ENCODE measurements at regions of chr18 and their contacts with region 1.

Region 1: DNA sequence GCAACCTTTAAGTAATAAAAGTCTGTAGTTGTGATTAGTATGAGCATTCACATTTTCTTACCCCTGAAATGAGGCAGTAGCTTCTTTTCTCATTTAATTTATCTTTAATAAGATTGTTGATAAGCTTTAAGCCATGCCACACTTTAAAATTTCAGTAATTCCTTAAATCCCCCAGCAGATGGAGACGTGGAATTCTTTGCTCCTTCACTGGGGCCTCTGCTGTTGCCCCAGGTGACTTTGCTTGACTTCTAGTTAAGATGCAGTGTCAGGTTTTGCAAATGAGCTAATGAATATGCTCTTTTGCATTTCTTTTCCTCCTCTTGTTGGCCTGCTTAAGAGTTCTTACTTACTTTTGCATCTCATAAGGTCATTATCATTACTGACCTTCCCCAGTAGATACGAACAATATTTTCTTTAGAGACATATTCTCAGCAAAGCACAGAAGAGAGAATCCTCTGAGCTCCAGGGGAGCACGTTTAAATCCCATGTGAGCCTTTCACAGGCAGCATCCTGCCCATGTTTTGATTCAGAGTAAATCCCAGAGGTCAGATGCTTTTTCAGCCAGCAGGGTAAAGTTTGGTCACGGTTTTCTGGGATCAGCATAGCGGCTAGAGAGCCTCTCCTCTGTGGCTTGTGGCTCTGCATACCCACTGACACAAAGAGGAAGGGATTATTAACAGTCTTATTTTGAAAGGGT is 222.9 kb downstream of the PTPRM start:
- DNase-seq: no peak

Region 2: DNA sequence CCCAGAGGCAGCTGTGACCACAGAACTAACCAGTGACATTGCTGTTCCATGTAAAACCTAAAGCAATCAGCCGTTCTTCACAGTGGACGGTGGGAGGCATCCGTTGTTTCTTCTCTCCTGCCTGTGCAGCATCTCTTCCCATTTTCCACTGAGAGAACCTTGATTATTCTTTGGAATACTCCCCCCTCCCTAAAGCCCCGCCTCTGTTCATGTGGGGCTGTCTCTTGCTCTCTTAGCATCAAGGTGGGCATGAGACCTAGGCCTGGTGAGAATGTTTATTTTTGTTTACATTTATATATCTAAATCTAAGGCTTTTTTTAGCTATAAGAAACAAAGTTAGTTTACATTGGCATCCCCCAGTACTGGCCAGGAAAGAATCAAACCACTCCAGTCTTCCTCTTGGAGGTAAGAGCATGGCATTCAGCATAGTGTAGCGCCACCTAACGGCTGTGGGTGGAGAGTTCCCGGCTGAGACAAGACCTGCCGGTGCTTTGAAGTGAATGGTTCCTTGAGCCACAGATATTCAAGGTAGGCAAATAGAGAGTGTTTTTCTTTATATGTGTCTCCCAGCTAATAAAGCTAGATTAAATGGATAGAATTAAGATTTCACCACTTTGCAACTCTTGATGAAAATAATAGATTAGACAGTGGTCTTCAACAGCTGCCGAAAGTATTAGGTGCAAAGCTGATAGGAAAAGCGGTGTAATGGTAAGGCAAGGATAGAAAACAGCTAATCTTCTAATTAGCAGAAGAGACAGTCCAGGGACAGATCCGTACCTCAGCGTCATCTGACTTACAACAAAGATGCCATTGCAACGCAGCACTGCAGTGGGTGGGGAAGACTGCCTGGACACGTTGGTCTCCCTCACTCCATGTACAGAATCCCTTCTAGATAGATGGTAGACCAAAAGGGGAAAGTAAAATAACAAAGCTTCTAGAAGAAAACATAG is 599.7 kb after region 1 on chr18:
- intact Hi-C with region 1: loop called (anchors 10 kb)
- DNase-seq: no peak

Measured in cardiac septum (tissue), 1 donor.